Head of caudate nucleus (tissue), 42 donors: ENCODE measurements at regions of chr4 and their contacts with region 1.

Region 1: GRCh38 chr4:186015212-186015785 is 53.7 kb upstream of the TLR3 start:
- DNase-seq: no peak

Region 2: DNA sequence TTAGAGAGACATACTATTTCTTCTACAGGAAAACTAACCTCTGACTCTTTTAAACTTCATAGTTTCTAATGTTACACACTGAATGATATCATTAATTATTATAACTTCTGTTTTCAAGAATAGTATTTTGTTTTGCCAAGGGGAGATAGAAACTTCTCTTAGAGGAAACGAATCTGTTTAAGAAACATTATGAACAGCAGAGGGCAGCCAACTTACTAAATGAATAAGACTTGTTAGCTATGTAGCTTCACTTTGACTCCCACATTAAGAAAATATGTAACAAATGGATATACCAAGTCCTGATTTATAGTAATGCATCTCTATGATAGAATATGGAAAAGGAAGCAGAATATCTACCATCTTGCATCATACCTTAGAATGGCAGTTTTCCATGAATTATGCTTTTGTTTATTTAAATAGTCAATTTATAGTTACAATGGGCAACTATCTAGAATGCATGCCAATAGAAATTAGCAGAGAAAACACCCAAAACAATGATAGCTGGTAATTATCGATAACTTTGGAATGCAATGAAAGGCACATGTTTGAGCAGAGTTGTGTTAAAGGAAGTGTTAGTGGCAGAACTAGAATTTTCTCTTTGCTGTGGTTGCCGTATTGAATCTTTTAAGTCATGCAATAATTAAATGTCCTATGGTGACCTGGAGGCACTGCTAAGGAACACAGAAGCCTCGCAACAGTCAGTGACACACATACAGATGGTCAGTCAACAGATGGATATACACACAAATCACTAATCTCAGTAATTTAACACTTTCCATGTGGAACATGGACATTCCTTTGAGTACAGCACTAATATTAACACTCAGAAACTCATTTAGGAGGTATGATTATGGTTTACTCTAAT is 374.3 kb before region 1 on chr4:
- intact Hi-C with region 1: loop called (anchors 10 kb)
- DNase-seq: peak in 4 of 42 donors; percentile 32 to 52 (median 35)

Region 3: DNA sequence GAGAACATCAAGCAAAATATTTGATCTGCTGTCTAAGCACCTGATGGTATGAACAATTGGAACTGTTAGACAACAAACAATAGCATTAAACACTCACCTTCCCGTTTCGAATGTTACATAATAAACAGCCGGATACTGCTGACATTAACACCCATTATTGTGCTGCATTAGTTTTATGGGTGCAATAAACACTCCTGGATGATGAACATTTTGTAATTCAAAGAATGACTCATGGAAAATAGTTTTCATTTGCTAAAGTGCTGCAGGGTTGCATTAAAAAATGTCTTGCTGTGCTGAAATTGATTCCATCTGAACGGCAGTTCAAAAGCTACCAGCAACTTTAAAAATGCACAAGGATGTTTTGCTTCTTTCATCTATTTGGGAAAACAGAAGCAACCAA is 102.5 kb before region 1 on chr4:
- intact Hi-C with region 1: no loop called
- DNase-seq: peak in 1 of 42 donors; percentile 21

Region 4: GRCh38 chr4:186104114-186104889 is 89.0 kb after region 1 on chr4 and contains the start of gene FAM149A:
- intact Hi-C with region 1: no loop called
- DNase-seq: peak in 40 of 42 donors; percentile 23 to 71 (median 50)